HCT116 (cell line): ENCODE measurements at regions of chr13 and their contacts with region 1.

Region 1: DNA sequence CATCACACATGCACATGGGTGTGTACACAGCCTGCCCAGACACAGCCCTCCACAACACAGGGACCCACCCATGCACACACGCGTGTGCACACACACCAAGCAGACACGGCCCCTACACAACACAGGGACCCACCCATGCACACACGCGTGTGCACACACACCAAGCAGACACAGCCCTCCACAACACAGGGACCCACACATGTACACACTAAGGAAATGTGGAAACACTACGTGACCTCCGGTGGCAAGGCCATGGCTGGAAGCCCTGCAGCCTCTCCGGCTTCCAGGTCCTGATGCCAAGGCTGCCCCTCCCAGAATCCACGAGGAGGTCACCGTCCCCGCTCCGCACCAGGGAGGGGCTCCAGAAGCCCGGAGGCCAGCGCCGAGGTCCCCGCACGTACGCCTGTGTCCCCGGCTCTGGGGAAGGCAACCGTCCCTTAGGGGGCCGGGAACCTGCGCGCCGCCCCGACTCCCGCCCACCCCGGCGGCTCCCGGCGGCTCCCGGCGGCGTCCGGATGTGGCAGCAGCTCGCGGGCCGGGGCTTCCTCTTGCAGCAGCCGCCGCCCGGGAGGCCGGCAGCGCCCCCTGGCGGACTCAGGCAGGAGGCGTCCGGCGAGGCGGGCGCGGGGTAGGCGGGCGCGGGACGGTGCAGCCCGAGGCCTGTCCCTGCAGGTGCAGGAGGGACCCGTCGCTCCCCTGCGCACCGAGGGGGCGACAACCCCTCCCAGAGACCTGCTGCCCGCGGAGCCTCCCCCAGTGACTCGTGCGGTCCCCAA is 29.8 kb upstream of the GRTP1 start:
- DNase-seq: peak; percentile 56
- ATAC-seq: peak; percentile 96
- H3K4me3 ChIP-seq: peak overlapping the region; percentile 84 to 92
- H3K27ac ChIP-seq: peak overlapping the region; percentile 72
- H3K4me1 ChIP-seq: peaks cover 3 to 13% of the 10 kb centered on the region in 2 experiments; a peak in 3 of 4 replicates
- H3K27me3 ChIP-seq: no peaks in the 10 kb centered on the region
- CTCF ChIP-seq: peak; percentile 36 to 74 (median 56); a peak in 5 of 6 replicates
- POLR2A ChIP-seq: no peak
- RAD21 ChIP-seq: peak; percentile 75

Region 2: GRCh38 chr13:112392719-112393118 is 1001.0 kb before region 1 on chr13:
- CTCF ChIA-PET with region 1: no interaction called
- POLR2A ChIA-PET with region 1: no interaction called
- RAD21 ChIA-PET with region 1: no interaction called
- intact Hi-C with region 1: no loop called
- DNase-seq: no peak
- ATAC-seq: 0 out of 2 replicates have a peak, but pooled peaks have one; percentile 40
- H3K4me3 ChIP-seq: no peak overlapping the region
- H3K27ac ChIP-seq: no peak overlapping the region
- H3K4me1 ChIP-seq: no peaks in the 10 kb centered on the region; a peak in 1 of 4 replicates
- H3K27me3 ChIP-seq: no peaks in the 10 kb centered on the region
- CTCF ChIP-seq: peak in 2 of 3 experiments; percentile 40 to 52; a peak in 4 of 6 replicates
- POLR2A ChIP-seq: no peak
- RAD21 ChIP-seq: no peak

Region 3: DNA sequence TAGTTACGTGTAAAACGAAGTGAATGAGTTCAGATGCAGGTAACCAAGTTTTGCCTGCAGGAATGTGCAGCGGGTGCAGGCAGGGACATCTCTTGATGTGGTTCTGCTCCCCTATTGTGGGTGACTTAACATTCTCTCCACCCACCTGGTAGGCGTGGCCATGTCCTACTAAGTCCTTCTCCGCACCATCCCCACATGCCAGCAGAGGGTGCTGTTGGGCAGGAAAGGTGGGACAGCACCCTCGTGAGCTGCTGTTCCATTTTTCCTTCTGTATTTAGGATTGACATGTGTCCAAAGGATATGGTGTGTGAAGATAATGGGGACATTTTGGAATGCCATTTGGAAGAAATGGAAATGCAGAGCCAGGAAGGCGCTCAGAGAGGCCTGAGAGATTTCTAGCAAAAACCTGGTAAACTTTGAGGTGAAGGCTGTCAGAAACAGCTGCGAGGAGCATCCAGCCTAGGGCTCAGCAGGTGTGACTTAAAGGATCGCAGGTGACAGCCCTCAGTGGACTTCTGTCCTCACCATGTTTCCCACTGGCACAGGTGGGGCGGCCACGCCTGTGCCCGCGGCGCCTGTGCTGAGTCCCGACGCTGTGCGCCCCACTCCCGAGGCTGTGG is 451.0 kb before region 1 on chr13:
- CTCF ChIA-PET with region 1: interaction called, 7 read pairs
- POLR2A ChIA-PET with region 1: no interaction called
- RAD21 ChIA-PET with region 1: no interaction called
- intact Hi-C with region 1: loop called (anchors 1 kb)
- DNase-seq: peak; percentile 91
- ATAC-seq: peak; percentile 94
- H3K4me3 ChIP-seq: peak overlapping the region; percentile 43 to 63
- H3K27ac ChIP-seq: peak overlapping the region; percentile 18; the same call in 1 of the 2 replicates
- H3K4me1 ChIP-seq: peaks cover 4 to 16% of the 10 kb centered on the region in 2 experiments; a peak in 3 of 4 replicates
- H3K27me3 ChIP-seq: no peaks in the 10 kb centered on the region
- CTCF ChIP-seq: peak; percentile 92 to 98 (median 97)
- POLR2A ChIP-seq: no peak
- RAD21 ChIP-seq: peak; percentile 95

Region 4: DNA sequence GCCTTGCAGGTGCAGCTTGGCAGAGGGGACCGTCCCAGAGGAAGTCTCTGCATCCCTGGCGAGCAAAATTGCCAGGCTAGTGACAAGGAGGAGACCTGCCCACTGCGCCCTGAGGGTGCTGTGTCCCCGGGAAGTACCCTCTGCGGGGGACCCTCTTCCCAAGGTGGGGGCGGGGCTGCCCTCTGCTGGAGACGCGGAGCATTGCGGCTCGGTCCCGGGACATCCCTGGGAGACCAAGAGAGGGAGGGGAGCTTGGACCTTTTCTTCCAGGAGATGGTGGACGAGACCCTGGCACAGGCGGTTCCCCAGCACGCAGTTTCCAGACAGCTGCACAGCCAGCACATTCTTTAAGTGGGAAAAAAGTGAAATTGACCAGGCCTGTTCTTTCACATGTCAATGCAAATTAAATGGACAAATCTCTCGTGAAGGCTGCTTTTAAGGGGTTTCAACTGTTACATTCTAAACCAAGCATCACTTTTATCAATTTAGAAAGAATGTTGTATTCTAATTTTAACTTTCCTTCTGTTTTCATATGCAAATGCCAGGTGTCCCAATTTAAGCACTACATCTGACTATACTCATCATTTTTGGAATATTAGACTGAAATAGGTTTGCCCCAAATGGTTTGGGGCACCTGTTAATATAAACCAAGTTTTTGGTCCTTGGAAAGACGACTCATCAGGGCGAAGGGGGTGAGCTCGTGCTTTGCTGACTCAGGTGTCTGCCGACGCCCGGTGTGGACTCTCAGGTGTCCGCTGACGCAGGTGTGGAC is 364.1 kb before region 1 on chr13:
- CTCF ChIA-PET with region 1: no interaction called
- POLR2A ChIA-PET with region 1: no interaction called
- RAD21 ChIA-PET with region 1: no interaction called
- intact Hi-C with region 1: loop called (anchors 10 kb)
- DNase-seq: no peak
- ATAC-seq: peak; percentile 85
- H3K4me3 ChIP-seq: no peak overlapping the region
- H3K27ac ChIP-seq: no peak overlapping the region
- H3K4me1 ChIP-seq: no peaks in the 10 kb centered on the region
- H3K27me3 ChIP-seq: no peaks in the 10 kb centered on the region
- CTCF ChIP-seq: peak; percentile 77 to 98 (median 98); a peak in 5 of 6 replicates
- POLR2A ChIP-seq: no peak
- RAD21 ChIP-seq: peak; percentile 79

Region 5: GRCh38 chr13:113275387-113275786 is 118.4 kb before region 1 on chr13:
- CTCF ChIA-PET with region 1: no interaction called
- POLR2A ChIA-PET with region 1: no interaction called
- RAD21 ChIA-PET with region 1: no interaction called
- intact Hi-C with region 1: loop called (anchors 1 kb)
- DNase-seq: peak; percentile 59
- ATAC-seq: peak; percentile 96
- H3K4me3 ChIP-seq: no peak overlapping the region
- H3K27ac ChIP-seq: no peak overlapping the region
- H3K4me1 ChIP-seq: peaks cover 0 to 11% of the 10 kb centered on the region in 2 experiments; a peak in 2 of 4 replicates
- H3K27me3 ChIP-seq: no peaks in the 10 kb centered on the region
- CTCF ChIP-seq: peak; percentile 66 to 81 (median 70); a peak in 5 of 6 replicates
- POLR2A ChIP-seq: no peak
- RAD21 ChIP-seq: peak; percentile 76